ENCODE measurements at regions of chr14 and their contacts with region 1.

Region 1: DNA sequence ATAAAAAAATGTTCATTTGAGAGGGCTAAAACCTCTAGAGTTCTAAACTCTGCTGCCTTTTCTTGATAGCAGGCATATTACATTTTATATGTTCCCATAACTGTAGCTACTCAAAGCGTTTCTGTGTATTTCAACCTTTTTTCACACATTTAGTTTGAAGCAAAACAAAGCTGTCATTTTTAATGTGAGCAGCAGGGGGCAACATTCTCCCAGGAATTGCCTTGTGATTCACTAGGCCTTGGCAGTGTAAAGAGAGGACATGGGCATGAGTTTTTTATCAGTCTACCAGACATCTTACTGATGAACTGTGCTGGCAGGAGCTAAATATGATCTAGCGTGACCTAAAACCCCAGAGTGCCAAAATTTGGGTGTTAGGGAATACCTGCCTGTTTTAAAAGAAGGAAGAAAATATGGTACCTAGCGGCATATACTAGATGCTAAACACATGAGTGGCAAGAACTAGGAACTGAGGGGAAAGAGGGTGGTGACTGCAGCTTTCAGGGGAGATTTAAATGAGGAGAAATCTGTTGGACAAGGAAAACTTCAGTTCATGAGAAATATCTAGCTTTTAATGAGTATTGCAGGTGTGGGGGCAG is 65.3 kb downstream of the IFT43 start:
- DNase-seq: peak in 4 of 5 donors; percentile 61 to 83 (median 76)
- H3K4me3 ChIP-seq: no peak overlapping the region
- H3K27ac ChIP-seq: no peak overlapping the region
- H3K4me1 ChIP-seq: peaks cover 0 to 2% (median 0%) of the 10 kb centered on the region in 3 donors
- H3K27me3 ChIP-seq: no peaks in the 10 kb centered on the region
- CTCF ChIP-seq: peak; percentile 86

Region 2: DNA sequence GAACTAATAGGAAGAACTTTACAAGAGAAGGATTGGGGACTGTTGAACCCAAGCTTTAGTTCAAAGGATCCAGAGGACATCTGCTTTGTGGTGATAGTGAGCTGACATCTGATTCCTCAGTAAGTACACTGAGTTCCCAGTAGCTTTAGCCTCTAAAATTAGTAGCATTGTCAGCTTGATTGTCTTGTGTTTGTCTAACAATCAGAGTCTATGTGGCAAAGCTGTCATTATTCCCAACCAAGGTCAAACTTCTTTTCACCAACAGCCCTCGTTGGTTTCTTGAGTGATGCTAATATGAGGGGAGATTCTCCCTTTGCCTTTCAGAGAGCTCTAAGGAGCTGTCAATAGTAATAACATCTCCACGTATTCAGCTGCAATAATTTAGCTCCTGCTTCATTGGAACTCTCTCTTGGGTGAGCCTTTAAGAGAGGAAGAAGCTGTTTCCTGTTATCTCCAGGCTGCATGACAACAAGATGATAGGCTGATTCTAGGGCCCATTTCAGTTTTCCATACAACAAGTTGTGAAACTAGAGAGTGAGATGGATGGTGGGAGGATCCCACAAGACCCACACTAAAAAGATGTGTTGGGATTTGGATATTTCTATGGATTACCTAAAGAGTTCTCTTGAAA is 115.8 kb before region 1 on chr14:
- intact Hi-C with region 1: no loop called
- DNase-seq: no peak
- H3K4me3 ChIP-seq: no peak overlapping the region
- H3K27ac ChIP-seq: no peak overlapping the region
- H3K4me1 ChIP-seq: no peaks in the 10 kb centered on the region
- H3K27me3 ChIP-seq: no peaks in the 10 kb centered on the region
- CTCF ChIP-seq: no peak

Region 3: DNA sequence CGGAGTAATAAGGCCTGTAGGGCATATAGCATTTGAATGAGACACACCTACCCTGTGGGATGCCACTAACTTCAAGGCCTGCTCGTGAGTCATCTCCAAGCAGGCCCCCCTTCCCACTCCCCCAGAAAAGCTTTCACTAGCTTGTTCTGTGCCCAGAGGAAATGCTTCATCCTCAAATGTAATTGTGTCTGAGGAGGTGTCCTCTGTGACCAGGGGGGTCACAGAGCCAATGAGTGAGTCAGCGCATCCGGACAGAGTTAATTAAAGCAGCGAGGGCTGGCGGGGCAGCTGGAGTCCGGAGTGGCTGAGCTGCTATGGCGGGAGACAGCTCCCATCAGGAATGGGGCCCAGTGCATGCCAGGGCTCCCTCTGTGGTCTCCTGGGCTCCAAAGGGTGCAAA is 298.0 kb after region 1 on chr14:
- intact Hi-C with region 1: loop called (anchors 10 kb)
- DNase-seq: peak in 3 of 5 donors; percentile 43 to 74 (median 45)
- H3K4me3 ChIP-seq: no peak overlapping the region
- H3K27ac ChIP-seq: no peak overlapping the region
- H3K4me1 ChIP-seq: peaks cover 0 to 5% (median 0%) of the 10 kb centered on the region in 3 donors
- H3K27me3 ChIP-seq: no peaks in the 10 kb centered on the region
- CTCF ChIP-seq: no peak

Region 4: DNA sequence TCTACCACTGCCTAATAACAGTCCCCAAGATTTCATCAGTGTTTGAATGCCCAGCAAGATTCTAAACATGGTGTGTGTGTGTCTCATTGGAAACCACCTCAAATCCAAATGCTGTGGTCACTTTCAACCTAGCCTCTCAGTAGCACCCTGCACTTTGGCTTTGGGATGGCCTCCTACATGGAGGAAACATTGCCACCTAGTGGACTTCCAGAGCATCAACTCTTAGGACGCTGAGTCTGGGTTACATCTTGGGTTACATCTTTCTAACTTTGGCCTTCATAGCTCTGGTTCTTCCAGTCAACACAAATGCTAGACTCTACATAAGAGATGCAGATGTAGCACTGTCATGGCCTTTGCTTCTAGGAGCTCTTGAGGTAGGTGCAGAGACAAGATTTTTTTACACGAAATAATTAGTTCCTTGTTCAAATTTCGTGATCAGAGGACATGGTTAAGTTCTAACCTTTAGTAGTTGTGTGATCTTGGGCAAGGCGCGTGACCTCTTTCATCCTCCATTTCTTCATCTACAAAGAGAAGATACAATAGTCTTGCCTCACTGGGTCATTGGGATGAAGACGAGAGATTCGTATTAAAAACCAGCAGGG is 596.9 kb after region 1 on chr14:
- intact Hi-C with region 1: loop called (anchors 10 kb)
- DNase-seq: peak in 4 of 5 donors; percentile 51 to 80 (median 64)
- H3K4me3 ChIP-seq: no peak overlapping the region
- H3K27ac ChIP-seq: no peak overlapping the region
- H3K4me1 ChIP-seq: no peaks in the 10 kb centered on the region
- H3K27me3 ChIP-seq: no peaks in the 10 kb centered on the region
- CTCF ChIP-seq: peak; percentile 68